PC-9 (cell line): ENCODE measurements at regions of chr7 and their contacts with region 1.

Region 1: GRCh38 chr7:106793015-106793975 is 71.8 kb upstream of the PIK3CG start:
- DNase-seq: no peak
- H3K4me3 ChIP-seq: no peak overlapping the region
- H3K27ac ChIP-seq: no peak overlapping the region
- H3K4me1 ChIP-seq: no peaks in the 10 kb centered on the region
- H3K27me3 ChIP-seq: no peaks in the 10 kb centered on the region
- CTCF ChIP-seq: peak; percentile 87

Region 2: GRCh38 chr7:106367018-106367420 is 426.3 kb before region 1 on chr7:
- CTCF ChIA-PET with region 1: no interaction called
- POLR2A ChIA-PET with region 1: interaction called, 16 read pairs
- intact Hi-C with region 1: no loop called
- DNase-seq: no peak
- H3K4me3 ChIP-seq: no peak overlapping the region
- H3K27ac ChIP-seq: peak overlapping the region; percentile 99
- H3K4me1 ChIP-seq: peaks cover 54% of the 10 kb centered on the region
- H3K27me3 ChIP-seq: no peaks in the 10 kb centered on the region
- CTCF ChIP-seq: 0 out of 2 replicates have a peak, but pooled peaks have one; percentile 21

Region 3: GRCh38 chr7:106767498-106768323 is 25.6 kb before region 1 on chr7:
- CTCF ChIA-PET with region 1: no interaction called
- POLR2A ChIA-PET with region 1: no interaction called
- intact Hi-C with region 1: no loop called
- DNase-seq: no peak
- H3K4me3 ChIP-seq: no peak overlapping the region
- H3K27ac ChIP-seq: no peak overlapping the region
- H3K4me1 ChIP-seq: peaks cover 29% of the 10 kb centered on the region
- H3K27me3 ChIP-seq: no peaks in the 10 kb centered on the region
- CTCF ChIP-seq: no peak

Region 4: DNA sequence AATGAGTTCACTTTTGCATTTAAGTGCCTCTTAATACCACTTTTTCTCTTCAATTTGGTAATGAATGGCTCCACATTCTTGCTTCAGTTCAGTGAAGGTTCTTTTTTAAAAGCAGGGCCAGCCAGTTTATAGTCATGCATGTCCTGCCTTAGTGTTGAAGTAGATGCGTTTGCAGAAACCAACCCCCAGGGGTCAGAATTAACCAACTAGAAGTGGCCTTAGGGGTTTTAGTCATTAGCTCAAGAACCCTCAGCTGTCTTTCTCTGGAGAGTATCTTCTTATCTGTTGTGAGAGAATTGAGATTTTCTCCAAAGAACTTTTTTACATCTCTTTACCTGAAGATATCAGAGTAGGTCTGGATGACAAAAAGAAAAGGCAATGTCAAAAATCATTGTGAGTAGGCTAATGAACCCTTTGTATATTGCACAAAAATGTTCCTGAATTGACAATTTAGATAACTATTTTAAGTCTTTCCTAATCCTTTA is 154.0 kb after region 1 on chr7:
- CTCF ChIA-PET with region 1: no interaction called
- POLR2A ChIA-PET with region 1: no interaction called
- intact Hi-C with region 1: loop called (anchors 2 kb)
- DNase-seq: peak; percentile 50 to 60
- H3K4me3 ChIP-seq: no peak overlapping the region
- H3K27ac ChIP-seq: no peak overlapping the region
- H3K4me1 ChIP-seq: no peaks in the 10 kb centered on the region
- H3K27me3 ChIP-seq: no peaks in the 10 kb centered on the region; the same call in 1 of the 2 replicates
- CTCF ChIP-seq: peak; percentile 75

Region 5: DNA sequence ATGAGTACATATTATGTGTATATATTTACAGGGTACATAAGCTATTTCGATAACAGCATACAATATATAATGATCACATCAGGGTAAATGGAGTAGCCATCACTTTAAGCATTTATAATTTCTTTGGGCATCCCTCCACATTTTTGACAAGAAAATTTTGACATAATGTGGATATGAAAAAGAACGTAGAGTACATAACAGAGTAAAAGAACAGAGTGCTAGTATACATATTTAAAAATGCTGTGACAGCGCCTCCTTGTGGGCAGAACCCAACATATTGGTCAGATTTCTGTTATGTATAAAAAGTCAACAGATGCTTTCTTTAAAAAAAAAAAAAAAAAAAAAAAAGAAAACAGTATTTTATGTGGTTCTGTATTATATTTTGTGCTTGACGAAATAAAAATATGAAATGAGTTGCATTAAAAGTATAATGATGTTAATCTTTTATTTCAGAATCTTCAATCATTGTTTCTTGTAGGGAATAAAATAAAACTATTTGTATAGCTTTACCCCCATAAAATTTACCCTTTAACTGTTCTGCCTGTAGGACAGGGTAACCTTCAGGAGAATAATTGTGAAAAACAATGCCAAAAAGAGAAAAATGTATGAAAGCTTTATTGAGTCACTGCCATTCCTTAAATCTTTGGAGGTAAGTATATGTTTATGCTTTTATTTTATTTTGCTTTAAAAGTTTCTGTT is 357.2 kb after region 1 on chr7:
- CTCF ChIA-PET with region 1: no interaction called
- POLR2A ChIA-PET with region 1: no interaction called
- intact Hi-C with region 1: loop called (anchors 1 kb)
- DNase-seq: peak; percentile 45 to 70
- H3K4me3 ChIP-seq: no peak overlapping the region
- H3K27ac ChIP-seq: no peak overlapping the region
- H3K4me1 ChIP-seq: peaks cover 12% of the 10 kb centered on the region; the same call in 1 of the 2 replicates
- H3K27me3 ChIP-seq: no peaks in the 10 kb centered on the region
- CTCF ChIP-seq: peak; percentile 87

Region 6: DNA sequence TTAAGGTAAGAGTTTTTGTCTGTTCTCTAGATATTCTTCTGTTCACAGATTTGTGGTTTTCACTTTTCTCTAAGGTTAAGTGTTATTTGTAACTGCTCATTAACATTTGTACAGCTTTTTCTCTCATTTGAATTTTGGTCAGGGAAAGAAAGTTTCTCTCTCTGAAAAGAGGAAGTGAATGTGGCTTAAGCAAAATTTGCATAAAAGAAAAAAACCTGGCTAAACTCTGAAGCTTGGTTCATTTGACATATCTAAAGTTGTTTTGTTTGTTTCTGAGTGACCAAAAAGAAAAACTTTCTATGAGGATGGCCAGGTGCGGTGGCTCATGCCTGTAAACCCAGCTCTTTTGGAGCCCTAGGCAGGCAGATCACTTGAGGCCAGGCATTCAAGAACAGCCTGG is 845.3 kb after region 1 on chr7:
- CTCF ChIA-PET with region 1: interaction called, 11 read pairs
- POLR2A ChIA-PET with region 1: no interaction called
- intact Hi-C with region 1: no loop called
- DNase-seq: no peak
- H3K4me3 ChIP-seq: no peak overlapping the region
- H3K27ac ChIP-seq: no peak overlapping the region
- H3K4me1 ChIP-seq: 0 out of 2 replicates have a peak, but pooled peaks cover 3% of the 10 kb centered on the region
- H3K27me3 ChIP-seq: no peaks in the 10 kb centered on the region
- CTCF ChIP-seq: no peak

Region 7: GRCh38 chr7:107725151-107725740 is 932.0 kb after region 1 on chr7:
- CTCF ChIA-PET with region 1: no interaction called
- POLR2A ChIA-PET with region 1: no interaction called
- intact Hi-C with region 1: loop called (anchors 10 kb)
- DNase-seq: peak; percentile 45 to 73
- H3K4me3 ChIP-seq: no peak overlapping the region
- H3K27ac ChIP-seq: no peak overlapping the region
- H3K4me1 ChIP-seq: no peaks in the 10 kb centered on the region
- H3K27me3 ChIP-seq: no peaks in the 10 kb centered on the region
- CTCF ChIP-seq: peak; percentile 86